Activated naive CD4-positive, alpha-beta T cell treated with anti-CD3 and anti-CD28 coated beads for 36 hours (primary cell): ENCODE measurements at regions of chr1 and their contacts with region 1.

Region 1: GRCh38 chr1:203702130-203702577 is 62.8 kb upstream of the LAX1 start:
- DNase-seq: peak; percentile 80
- H3K4me3 Mint-ChIP-seq: no peak overlapping the region
- H3K27ac Mint-ChIP-seq: peak overlapping the region; percentile 67
- H3K4me1 Mint-ChIP-seq: no peaks in the 10 kb centered on the region
- H3K27me3 Mint-ChIP-seq: no peaks in the 10 kb centered on the region

Region 2: GRCh38 chr1:203504397-203505250 is 197.5 kb before region 1 on chr1:
- CTCF ChIA-PET with region 1: interaction called, 130 read pairs
- intact Hi-C with region 1: loop called (anchors 1 kb)
- DNase-seq: peak; percentile 91
- H3K4me3 Mint-ChIP-seq: no peak overlapping the region
- H3K27ac Mint-ChIP-seq: no peak overlapping the region
- H3K4me1 Mint-ChIP-seq: peaks cover 6% of the 10 kb centered on the region
- H3K27me3 Mint-ChIP-seq: no peaks in the 10 kb centered on the region

Region 3: GRCh38 chr1:203612932-203613682 is 89.0 kb before region 1 on chr1:
- CTCF ChIA-PET with region 1: interaction called, 8 read pairs
- intact Hi-C with region 1: loop called (anchors 5 kb)
- DNase-seq: peak; percentile 57
- H3K4me3 Mint-ChIP-seq: no peak overlapping the region
- H3K27ac Mint-ChIP-seq: peak overlapping the region; percentile 43
- H3K4me1 Mint-ChIP-seq: peaks cover 26% of the 10 kb centered on the region
- H3K27me3 Mint-ChIP-seq: no peaks in the 10 kb centered on the region

Region 4: DNA sequence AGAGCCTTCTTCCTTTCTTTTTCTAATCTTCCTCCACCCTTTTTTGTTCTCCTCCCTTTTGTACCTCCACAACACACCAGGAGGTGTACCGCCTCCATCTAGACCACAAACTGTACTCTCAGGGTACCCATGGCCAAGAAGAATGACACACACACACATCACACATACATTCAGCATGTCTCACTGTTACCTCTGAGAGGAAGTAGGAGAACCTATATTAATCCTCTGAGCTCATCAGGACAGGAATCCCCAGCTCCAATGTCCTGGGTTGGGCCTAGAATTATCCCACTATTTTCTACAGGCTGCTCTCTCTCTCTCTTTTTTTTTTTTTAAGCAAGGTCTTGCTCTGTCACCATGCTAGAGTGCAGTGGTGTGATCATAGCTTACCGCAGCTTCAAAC is 38.9 kb before region 1 on chr1:
- CTCF ChIA-PET with region 1: interaction called, 6 read pairs
- intact Hi-C with region 1: loop called (anchors 5 kb)
- DNase-seq: peak; percentile 40
- H3K4me3 Mint-ChIP-seq: no peak overlapping the region
- H3K27ac Mint-ChIP-seq: no peak overlapping the region
- H3K4me1 Mint-ChIP-seq: peaks cover 28% of the 10 kb centered on the region
- H3K27me3 Mint-ChIP-seq: no peaks in the 10 kb centered on the region

Region 5: DNA sequence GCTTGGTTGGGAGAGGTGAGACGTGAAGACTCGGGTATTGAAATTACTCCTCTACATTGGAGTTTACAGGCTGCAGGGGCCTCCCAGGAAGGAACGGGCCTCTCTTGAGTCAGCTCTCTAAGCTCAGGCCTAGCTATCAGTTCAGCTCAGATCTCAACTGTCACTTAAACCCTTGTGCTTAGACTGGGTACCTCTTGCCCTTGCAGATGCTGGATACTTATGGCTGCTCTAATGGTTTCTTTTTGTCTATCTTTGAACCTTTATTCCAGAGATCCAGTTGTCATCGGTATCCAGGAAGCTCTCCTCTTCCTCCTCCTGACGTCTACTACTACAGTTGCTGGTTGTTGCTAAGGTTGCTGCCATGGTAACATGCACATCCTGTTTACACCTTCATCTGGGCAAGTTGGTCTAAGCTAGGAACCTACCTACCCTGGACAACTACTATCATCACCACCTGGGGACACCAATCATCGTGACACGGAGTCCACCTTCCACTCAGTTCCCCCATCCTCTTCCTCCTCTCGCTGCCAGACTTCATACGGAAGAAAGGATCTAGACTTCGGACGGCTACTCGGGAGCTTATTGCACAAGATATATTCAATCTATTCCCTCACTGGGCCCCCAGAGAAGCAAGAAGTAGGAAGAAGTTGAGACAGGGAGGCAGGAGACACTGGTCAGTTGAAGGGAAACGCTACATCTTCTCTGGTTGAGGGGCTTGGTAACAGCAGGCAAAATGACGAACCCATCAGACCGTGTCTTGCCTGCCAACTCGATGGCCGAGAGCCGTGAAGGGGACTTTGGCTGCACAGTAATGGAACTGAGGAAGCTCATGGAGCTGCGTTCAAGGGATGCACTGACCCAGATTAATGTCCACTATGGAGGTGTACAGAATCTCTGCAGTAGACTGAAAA is 19.4 kb before region 1 on chr1:
- CTCF ChIA-PET with region 1: interaction called, 55 read pairs
- intact Hi-C with region 1: no loop called
- DNase-seq: peak; percentile 71
- H3K4me3 Mint-ChIP-seq: peak overlapping the region; percentile 44
- H3K27ac Mint-ChIP-seq: peak overlapping the region; percentile 79
- H3K4me1 Mint-ChIP-seq: peaks cover 26% of the 10 kb centered on the region
- H3K27me3 Mint-ChIP-seq: no peaks in the 10 kb centered on the region